Tibial artery (tissue), 4 donors: ENCODE measurements at regions of chr22 and their contacts with region 1.

Region 1: DNA sequence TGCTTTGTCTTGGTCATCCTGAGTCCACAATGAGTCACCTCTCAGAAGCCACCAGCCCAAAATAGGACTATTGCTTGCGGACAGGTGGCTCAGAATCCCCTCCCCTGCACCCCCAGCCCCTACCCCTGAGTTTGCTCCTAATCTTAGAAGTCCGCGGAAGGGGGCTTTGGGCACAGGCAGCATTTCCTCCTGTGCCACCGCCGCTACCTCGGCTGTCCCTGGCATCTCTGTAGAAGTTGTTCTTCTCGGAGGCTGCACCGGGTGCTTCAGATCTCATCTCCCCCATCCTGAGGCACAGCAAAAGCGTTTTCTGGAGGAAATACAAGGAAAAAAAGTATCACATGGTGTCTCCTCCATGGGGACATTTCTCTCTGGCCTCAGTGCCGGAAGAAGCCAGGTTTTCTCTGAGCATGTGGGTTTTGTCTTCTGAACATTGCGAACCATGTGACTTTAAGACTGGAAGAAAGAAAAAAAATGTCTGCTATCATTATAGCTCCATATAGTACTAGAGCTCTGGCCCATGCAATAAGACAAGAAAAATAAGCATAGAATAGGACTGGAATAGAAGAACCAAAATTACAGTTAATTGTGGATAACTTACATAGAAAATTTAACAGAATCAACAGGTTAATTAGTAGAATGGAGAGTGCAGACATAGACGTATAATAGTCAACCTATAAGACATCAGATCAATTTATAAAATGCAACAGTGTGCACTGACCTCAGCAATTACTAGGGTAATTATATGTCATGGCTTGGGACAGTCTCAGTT is 63.2 kb downstream of the SHISAL1 start:
- DNase-seq: no peak
- H3K4me3 ChIP-seq: no peak overlapping the region
- H3K27ac ChIP-seq: no peak overlapping the region
- H3K4me1 ChIP-seq: no peaks in the 10 kb centered on the region
- H3K27me3 ChIP-seq: peaks cover 0 to 6% of the 10 kb centered on the region in 2 donors
- CTCF ChIP-seq: no peak

Region 2: GRCh38 chr22:44207173-44207980 is 42.2 kb before region 1 on chr22:
- intact Hi-C with region 1: loop called (anchors 1 kb)
- DNase-seq: no peak
- H3K4me3 ChIP-seq: no peak overlapping the region
- H3K27ac ChIP-seq: no peak overlapping the region
- H3K4me1 ChIP-seq: peaks cover 0 to 19% (median 7%) of the 10 kb centered on the region in 4 donors
- H3K27me3 ChIP-seq: peaks cover 0 to 5% of the 10 kb centered on the region in 2 donors
- CTCF ChIP-seq: no peak